Activated T-helper 2 cell treated with anti-CD3 and anti-CD28 coated beads, Interferon-gamma antibody, Interleukin-2, Interleukin-4, amounts not matched to agents 10 μg/mL and 5 μg/mL and 100 μg/mL, durations not matched to agents 14 hours and 24 hours and 36 hours (primary cell): ENCODE measurements at regions of chr3 and their contacts with region 1.

Region 1: DNA sequence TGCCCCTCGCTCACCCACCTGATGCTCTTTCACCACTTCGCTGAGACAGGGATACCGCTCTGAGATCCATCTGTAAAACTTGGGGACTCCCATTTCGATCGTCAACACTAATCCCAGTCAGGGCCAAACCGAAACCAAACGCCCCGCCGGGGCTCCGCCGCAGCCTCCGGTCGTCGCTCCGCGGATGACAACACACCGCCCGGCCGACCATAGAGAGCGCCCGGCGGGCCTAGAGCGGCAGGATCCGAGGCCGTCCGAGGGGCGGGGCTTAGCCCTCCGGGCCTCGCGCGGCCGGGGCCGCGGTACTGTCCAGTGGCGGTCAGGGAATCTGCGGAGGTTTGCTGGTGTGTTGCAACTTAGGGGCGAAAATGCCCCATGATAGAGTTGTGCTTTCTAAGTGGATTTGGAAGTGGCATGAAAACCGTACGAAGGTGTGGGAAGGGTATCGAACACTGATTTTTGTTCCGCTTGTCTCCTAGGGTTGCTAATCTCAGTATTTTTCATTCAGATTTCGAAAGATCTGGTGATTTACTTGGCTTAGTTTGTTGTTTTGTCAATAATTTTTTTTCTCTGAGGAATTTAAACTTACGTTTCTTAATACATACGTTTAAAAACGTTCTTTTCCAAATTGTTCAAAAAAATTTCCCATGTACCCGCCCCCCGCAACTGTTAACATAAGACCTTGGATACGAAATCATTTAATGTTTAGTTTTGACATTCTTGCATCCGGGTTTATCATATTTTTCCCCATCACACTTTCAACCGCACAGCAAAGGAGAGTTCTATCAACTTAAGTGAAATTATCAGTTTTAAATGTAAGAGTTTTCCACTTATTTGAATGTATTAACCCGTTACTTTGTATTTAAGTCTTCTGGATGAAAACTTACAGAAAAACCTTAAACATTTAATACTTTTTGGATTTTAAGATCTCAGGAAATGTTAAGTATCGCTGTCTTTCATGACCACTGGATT is at the start of gene XRN1:
- DNase-seq: peak; percentile 93
- H3K4me3 Mint-ChIP-seq: peak within 1 kb of the TSS; percentile 91
- H3K27ac Mint-ChIP-seq: peak within 1 kb of the TSS; percentile 96
- H3K4me1 Mint-ChIP-seq: peaks cover 21% of the 10 kb centered on the region
- H3K27me3 Mint-ChIP-seq: no peaks in the 10 kb centered on the region
- total RNA-seq, gene XRN1: 51.4 and 55.4 TPM in 2 replicates

Region 2: GRCh38 chr3:142148792-142149672 is 299.1 kb before region 1 on chr3 and contains the start of gene TFDP2:
- intact Hi-C with region 1: loop called (anchors 10 kb)
- DNase-seq: peak; percentile 86
- H3K4me3 Mint-ChIP-seq: peak within 1 kb of the TSS; percentile 84
- H3K27ac Mint-ChIP-seq: peak within 1 kb of the TSS; percentile 64
- H3K4me1 Mint-ChIP-seq: peaks cover 30% of the 10 kb centered on the region
- H3K27me3 Mint-ChIP-seq: peaks cover 3% of the 10 kb centered on the region
- total RNA-seq, gene TFDP2: 36.7 and 37.2 TPM in 2 replicates

Region 3: GRCh38 chr3:142263118-142263517 is 185.0 kb before region 1 on chr3:
- intact Hi-C with region 1: no loop called
- DNase-seq: no peak
- H3K4me3 Mint-ChIP-seq: no peak overlapping the region
- H3K27ac Mint-ChIP-seq: no peak overlapping the region
- H3K4me1 Mint-ChIP-seq: peaks cover 11% of the 10 kb centered on the region
- H3K27me3 Mint-ChIP-seq: no peaks in the 10 kb centered on the region

Region 4: DNA sequence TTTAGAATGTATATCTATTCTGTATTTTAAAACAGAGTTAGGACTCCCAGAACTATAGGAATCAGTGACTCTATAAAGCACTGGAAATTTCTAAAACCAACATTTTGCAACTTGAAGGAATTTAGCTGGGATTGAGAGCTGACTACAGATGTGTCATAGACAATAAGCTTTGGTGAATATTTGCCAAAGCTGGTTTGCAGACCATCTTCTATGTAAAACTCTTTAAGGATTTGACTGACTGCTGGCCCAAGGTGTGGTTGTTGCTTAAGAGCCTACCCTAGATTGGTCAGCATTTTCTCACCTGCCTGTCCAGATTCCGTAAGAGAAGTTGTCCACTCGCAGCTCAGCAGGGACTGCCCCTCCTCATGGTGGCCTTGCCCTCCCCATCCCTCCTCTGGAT is 149.5 kb before region 1 on chr3:
- intact Hi-C with region 1: no loop called
- DNase-seq: no peak
- H3K4me3 Mint-ChIP-seq: no peak overlapping the region
- H3K27ac Mint-ChIP-seq: no peak overlapping the region
- H3K4me1 Mint-ChIP-seq: no peaks in the 10 kb centered on the region
- H3K27me3 Mint-ChIP-seq: no peaks in the 10 kb centered on the region

Region 5: GRCh38 chr3:142509079-142509478 is 60.9 kb after region 1 on chr3:
- intact Hi-C with region 1: loop called (anchors 2 kb)
- DNase-seq: no peak
- H3K4me3 Mint-ChIP-seq: peak overlapping the region; percentile 69
- H3K27ac Mint-ChIP-seq: peak overlapping the region; percentile 86
- H3K4me1 Mint-ChIP-seq: peaks cover 20% of the 10 kb centered on the region
- H3K27me3 Mint-ChIP-seq: no peaks in the 10 kb centered on the region

Region 6: DNA sequence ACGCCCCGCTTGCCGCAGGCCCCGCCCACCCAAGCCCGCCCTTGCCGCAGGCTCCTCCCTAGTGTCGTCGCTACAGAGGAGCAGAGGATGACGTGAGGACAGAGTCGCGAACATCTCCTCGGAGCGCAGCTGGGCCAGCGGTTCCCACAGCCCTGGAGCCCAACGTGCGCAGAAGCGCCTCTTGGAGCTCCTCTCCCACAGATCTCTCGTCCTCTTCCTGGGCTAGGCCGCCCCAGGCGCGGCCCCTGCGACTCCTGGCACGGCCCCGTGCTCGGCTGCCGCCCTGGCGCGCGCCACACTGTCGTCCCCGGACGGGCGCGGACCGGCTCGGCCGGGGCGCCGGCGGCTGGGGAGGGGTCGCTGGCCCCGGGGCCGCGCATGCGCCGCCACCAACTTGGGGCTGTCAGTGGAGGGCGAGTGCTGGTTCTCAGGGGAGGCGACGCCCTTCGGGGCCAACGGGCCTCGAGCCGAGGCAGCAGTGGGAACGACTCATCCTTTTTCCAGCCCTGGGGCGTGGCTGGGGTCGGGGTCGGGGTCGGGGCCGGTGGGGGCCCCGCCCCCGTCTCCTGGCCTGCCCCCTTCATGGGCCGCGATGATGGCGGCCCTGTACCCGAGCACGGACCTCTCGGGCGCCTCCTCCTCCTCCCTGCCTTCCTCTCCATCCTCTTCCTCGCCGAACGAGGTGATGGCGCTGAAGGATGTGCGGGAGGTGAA is 276.0 kb after region 1 on chr3 and contains the start of gene TRPC1:
- intact Hi-C with region 1: loop called (anchors 5 kb)
- DNase-seq: peak; percentile 76
- H3K4me3 Mint-ChIP-seq: peak within 1 kb of the TSS; percentile 86
- H3K27ac Mint-ChIP-seq: peak within 1 kb of the TSS; percentile 80
- H3K4me1 Mint-ChIP-seq: peaks cover 4% of the 10 kb centered on the region
- H3K27me3 Mint-ChIP-seq: peaks cover 56% of the 10 kb centered on the region
- total RNA-seq, gene TRPC1: 1.4 and 2.5 TPM in 2 replicates